Activated CD4-positive, alpha-beta T cell treated with anti-CD3 and anti-CD28 coated beads for 36 hours (primary cell): ENCODE measurements at regions of chr12 and their contacts with region 1.

Region 1: GRCh38 chr12:89162704-89163261 is 189.5 kb downstream of the DUSP6 start:
- DNase-seq: peak; percentile 82
- ATAC-seq: peak; percentile 91
- H3K4me3 Mint-ChIP-seq: no peak overlapping the region
- H3K27ac Mint-ChIP-seq: no peak overlapping the region
- H3K4me1 Mint-ChIP-seq: peaks cover 14% of the 10 kb centered on the region
- H3K27me3 Mint-ChIP-seq: no peaks in the 10 kb centered on the region

Region 2: DNA sequence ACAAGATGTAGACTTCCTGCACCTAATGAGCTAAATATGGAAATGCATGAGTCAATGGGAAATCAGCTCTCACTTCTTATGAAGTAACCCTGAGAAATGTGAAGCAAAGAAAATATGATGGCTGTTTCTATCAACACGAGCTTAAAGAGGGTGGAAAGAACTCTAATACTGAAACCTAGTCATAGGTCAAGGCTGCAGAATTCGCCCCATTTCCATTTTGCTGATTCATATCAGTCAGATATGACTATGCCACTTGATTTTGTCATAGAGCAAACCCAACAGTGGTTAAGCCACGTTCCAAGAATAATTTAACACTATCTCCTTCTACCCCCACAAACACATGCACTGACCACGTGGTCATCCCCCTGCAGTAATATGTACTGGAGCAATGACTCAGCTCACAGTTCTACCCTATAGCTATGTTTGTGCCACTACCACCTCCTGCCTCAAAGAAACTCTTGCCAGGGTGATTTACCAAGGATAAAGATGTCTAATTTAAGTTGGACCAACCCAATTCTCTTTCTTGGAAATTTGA is 863.1 kb before region 1 on chr12:
- CTCF ChIA-PET with region 1: no interaction called
- POLR2A ChIA-PET with region 1: no interaction called
- intact Hi-C with region 1: loop called in 1 of 2 experiments (anchors 2 kb)
- DNase-seq: peak; percentile 79
- ATAC-seq: peak; percentile 90
- H3K4me3 Mint-ChIP-seq: no peak overlapping the region
- H3K27ac Mint-ChIP-seq: peak overlapping the region; percentile 91
- H3K4me1 Mint-ChIP-seq: peaks cover 31% of the 10 kb centered on the region
- H3K27me3 Mint-ChIP-seq: peaks cover 4% of the 10 kb centered on the region

Region 3: GRCh38 chr12:89092297-89092696 is 70.5 kb before region 1 on chr12:
- CTCF ChIA-PET with region 1: no interaction called
- POLR2A ChIA-PET with region 1: no interaction called
- intact Hi-C with region 1: loop called (anchors 1 to 2 kb)
- DNase-seq: peak; percentile 53
- ATAC-seq: peak; percentile 90
- H3K4me3 Mint-ChIP-seq: no peak overlapping the region
- H3K27ac Mint-ChIP-seq: peak overlapping the region; percentile 85
- H3K4me1 Mint-ChIP-seq: peaks cover 27% of the 10 kb centered on the region
- H3K27me3 Mint-ChIP-seq: no peaks in the 10 kb centered on the region

Region 4: DNA sequence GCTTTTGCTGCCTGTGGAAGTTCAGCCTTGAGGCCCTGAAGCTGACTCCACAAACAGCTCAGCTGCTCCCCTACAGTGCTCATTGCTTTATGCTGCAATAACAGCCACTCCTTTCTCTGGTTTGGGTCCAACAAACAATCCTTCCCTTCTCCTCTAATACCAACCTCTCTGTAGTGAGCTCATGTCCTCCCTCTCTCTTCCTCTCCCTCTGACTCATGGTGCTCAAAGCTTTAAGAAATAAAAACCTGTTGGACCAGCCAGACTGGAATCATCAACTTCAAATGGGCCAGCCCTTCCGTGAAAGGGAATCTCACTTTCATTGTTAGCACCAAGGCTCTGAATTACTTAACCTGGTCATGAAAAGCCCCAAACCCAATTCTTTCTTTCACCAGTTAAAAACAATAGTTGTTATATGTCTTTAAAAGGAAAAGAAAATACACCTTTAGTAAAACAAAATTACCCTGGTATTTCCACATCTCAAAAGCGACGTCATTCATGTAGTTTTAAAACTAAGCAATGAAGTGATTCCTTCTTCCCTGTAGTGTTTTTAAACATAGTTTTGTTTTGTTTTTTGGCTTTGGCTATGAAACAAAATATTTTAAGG is 63.1 kb after region 1 on chr12:
- CTCF ChIA-PET with region 1: interaction called, 6 read pairs
- POLR2A ChIA-PET with region 1: interaction called, 12 read pairs
- intact Hi-C with region 1: loop called (anchors 1 kb)
- DNase-seq: peak; percentile 71
- ATAC-seq: peak; percentile 80
- H3K4me3 Mint-ChIP-seq: peak overlapping the region; percentile 58
- H3K27ac Mint-ChIP-seq: peak overlapping the region; percentile 99
- H3K4me1 Mint-ChIP-seq: peaks cover 68% of the 10 kb centered on the region
- H3K27me3 Mint-ChIP-seq: no peaks in the 10 kb centered on the region

Region 5: DNA sequence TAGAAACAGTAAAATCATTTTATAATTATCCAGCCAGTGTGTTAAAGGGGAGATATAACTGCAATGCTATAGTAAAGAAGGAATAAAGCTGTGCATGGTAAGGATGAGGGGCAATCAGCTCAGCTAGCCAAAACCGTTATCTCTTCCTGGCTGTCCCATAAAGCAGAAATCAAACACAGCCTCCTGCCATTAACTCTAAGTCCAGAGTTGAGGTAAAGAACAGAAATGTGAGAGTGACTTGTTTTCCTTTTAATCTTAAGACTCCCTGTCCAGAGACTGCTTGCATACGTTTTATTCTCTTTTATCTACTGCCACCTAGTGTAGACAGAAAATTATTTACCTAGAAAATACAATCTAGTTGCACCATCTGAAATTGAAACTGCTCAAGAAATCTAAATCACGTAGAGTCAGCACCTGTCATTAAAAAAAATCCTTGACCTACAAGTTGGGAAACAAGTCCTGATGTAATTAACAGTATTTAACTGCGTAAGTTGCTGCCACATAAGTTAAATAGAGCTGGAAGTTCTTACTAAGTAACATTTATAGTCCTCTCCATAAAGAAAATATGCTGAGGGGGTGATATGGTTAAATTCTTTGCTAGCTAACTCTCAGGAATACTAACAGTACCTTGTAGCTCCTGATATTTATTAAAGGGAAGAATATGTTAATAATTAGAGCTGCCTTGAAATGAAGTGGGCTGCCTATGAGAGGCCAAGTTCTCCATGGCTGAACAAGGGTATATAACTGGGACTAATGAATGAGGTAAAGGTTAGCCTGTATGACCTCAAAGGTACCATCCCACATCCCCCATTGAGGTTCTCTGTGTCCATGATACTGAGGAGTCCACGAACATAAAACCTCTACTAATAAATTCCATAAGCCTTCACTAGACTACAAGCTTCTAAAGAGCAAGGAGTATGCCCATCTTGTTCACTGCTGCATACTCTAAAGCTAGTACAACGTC is 299.1 kb after region 1 on chr12:
- CTCF ChIA-PET with region 1: no interaction called
- POLR2A ChIA-PET with region 1: no interaction called
- intact Hi-C with region 1: loop called in 1 of 2 experiments (anchors 5 kb)
- DNase-seq: no peak
- ATAC-seq: peak; percentile 93
- H3K4me3 Mint-ChIP-seq: peak overlapping the region; percentile 13
- H3K27ac Mint-ChIP-seq: peak overlapping the region; percentile 68
- H3K4me1 Mint-ChIP-seq: peaks cover 20% of the 10 kb centered on the region
- H3K27me3 Mint-ChIP-seq: no peaks in the 10 kb centered on the region

Region 6: DNA sequence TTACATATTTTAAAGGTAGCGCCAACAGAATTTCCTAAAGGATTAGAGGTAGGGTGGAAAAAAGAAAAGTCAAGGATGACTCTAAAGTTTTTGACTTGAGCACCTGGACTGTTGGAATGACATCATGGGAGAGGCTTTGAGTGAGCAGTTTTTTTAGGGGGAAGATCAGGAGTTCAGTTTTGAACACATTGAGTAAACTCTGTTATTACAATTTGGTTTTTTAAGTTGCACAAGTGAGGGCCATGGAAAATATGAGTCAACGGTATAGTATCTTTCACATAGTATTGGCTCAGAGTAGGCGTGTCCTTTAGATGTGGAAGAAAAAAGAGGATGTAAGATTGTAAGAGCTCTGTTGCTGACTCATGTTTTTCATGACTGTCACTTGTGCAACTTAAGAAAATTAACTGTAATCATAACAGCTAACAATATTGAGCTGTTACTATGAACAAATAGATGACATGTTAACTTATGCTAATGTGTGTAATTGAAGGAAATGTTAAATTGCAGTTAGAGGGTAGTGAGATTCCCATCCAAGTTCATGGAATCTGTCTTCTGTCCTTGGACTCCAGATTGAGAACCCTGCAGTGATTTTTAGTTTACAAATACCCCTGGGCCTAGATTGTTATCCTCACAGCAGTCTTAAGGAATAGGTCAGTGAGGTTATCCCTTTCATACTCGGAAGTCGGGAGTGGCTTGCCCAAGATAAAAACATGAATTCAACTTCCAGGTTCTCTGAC is 594.0 kb after region 1 on chr12:
- CTCF ChIA-PET with region 1: no interaction called
- POLR2A ChIA-PET with region 1: no interaction called
- intact Hi-C with region 1: loop called in 1 of 2 experiments (anchors 5 kb)
- DNase-seq: peak; percentile 28
- ATAC-seq: peak; percentile 94
- H3K4me3 Mint-ChIP-seq: peak overlapping the region; percentile 22
- H3K27ac Mint-ChIP-seq: peak overlapping the region; percentile 72
- H3K4me1 Mint-ChIP-seq: peaks cover 37% of the 10 kb centered on the region
- H3K27me3 Mint-ChIP-seq: no peaks in the 10 kb centered on the region